ENCODE measurements at regions of chr10 and their contacts with region 1.

Region 1: DNA sequence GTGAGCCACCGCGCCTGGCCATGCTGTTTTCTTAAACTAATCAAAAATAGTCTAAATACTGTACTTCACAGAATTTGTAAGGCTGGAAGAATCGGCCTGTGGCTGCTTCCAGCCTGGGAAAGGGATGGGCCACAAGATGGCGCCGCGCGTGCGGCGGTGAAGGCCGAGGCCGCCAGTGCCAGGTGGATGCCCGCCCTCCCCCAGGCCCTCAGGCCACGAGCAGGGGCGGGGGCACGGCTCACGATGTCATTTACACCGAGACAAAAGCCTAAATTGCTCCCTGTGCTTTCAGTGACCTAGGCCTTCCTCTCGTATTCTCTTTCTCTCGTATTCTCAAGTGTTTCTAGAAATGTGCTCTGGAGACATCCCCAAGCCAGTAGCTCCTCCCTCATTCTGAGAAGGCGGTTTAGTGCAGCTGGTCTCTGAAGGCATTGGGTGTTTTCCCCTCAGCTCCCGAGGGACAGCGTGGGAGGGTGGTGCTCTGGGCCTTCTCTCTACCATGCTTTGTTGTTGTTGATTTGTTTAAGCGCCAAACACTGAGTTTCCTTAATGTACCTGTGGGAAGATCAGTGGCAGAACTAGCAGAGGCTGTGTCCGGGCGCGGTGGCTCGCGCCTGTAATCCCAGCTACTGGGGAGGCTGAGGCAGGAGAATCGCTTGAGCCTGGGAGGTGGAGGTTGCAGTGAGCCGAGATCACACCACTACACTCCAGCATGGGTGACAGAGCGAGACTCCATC is 68.4 kb downstream of the CDC123 start:
- DNase-seq: peak; percentile 82
- H3K4me3 ChIP-seq: peak overlapping the region; percentile 56
- H3K27ac ChIP-seq: peak overlapping the region; percentile 69
- H3K27me3 ChIP-seq: no peaks in the 10 kb centered on the region
- CTCF ChIP-seq: peak; percentile 79

Region 2: GRCh38 chr10:12656518-12657142 is 392.3 kb after region 1 on chr10:
- in situ Hi-C with region 1: loop called (anchors 25 kb)
- DNase-seq: peak; percentile 47
- H3K4me3 ChIP-seq: no peak overlapping the region
- H3K27ac ChIP-seq: no peak overlapping the region
- H3K27me3 ChIP-seq: no peaks in the 10 kb centered on the region
- CTCF ChIP-seq: peak; percentile 72

Measured in brain microvascular endothelial cell (primary cell).